Activated naive CD4-positive, alpha-beta T cell treated with anti-CD3 and anti-CD28 coated beads for 36 hours (primary cell): ENCODE measurements at regions of chr1 and their contacts with region 1.

Region 1: GRCh38 chr1:98794196-98794886 is 132.8 kb downstream of the SNX7 start:
- DNase-seq: peak; percentile 74
- H3K4me3 Mint-ChIP-seq: no peak overlapping the region
- H3K27ac Mint-ChIP-seq: no peak overlapping the region
- H3K4me1 Mint-ChIP-seq: peaks cover 22% of the 10 kb centered on the region
- H3K27me3 Mint-ChIP-seq: no peaks in the 10 kb centered on the region

Region 2: GRCh38 chr1:98870959-98871903 is 76.9 kb after region 1 on chr1:
- CTCF ChIA-PET with region 1: no interaction called
- intact Hi-C with region 1: loop called (anchors 1 kb)
- DNase-seq: peak; percentile 60
- H3K4me3 Mint-ChIP-seq: peak overlapping the region; percentile 68
- H3K27ac Mint-ChIP-seq: peak overlapping the region; percentile 97
- H3K4me1 Mint-ChIP-seq: peaks cover 23% of the 10 kb centered on the region
- H3K27me3 Mint-ChIP-seq: no peaks in the 10 kb centered on the region

Region 3: GRCh38 chr1:98940722-98941079 is 146.4 kb after region 1 on chr1:
- CTCF ChIA-PET with region 1: interaction called, 7 read pairs
- intact Hi-C with region 1: loop called (anchors 1 kb)
- DNase-seq: peak; percentile 49
- H3K4me3 Mint-ChIP-seq: no peak overlapping the region
- H3K27ac Mint-ChIP-seq: no peak overlapping the region
- H3K4me1 Mint-ChIP-seq: peaks cover 12% of the 10 kb centered on the region
- H3K27me3 Mint-ChIP-seq: no peaks in the 10 kb centered on the region

Region 4: DNA sequence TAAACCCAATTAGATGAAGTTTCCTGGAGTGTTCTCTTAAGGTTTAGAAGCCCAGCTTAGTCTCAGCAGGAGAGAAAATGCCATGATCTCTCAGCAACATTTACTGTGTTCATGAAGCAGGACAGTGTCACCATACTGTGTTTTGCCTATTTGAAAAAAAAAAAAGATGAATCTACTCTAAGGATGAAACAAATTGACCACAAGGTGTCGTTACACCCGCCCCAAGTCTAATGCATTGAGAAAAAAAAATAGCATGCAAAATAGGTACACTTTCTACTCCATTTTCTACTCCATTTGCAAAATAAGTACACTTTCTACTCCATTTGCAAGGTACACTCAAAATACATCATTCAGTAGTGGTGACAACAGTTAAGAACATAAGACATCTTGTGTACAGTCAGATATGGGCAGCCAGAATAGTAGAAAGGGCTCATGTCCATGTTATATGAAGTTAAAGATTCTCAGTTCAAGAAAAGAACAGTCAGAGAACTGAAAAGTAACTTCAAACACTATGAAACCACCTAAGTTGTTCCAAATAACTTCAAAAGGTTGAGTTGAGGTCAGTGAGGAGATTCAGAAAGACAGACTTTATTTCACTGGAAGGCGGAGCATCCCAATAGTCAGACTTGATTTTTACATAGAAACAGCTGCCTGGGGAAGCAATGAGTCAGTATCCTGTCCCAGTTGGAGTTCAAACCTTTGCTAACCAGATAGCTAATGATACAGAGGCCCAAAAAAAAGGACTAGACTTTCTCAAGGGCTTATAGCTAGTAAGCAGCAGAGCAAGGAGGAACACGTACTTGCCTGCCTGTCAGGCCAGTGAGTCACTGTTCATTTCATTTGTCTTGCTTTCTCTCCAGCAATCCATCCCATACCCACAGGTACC is 197.0 kb after region 1 on chr1:
- CTCF ChIA-PET with region 1: no interaction called
- intact Hi-C with region 1: loop called (anchors 5 kb)
- DNase-seq: peak; percentile 12
- H3K4me3 Mint-ChIP-seq: no peak overlapping the region
- H3K27ac Mint-ChIP-seq: no peak overlapping the region
- H3K4me1 Mint-ChIP-seq: peaks cover 10% of the 10 kb centered on the region
- H3K27me3 Mint-ChIP-seq: no peaks in the 10 kb centered on the region

Region 5: GRCh38 chr1:99180343-99180808 is 386.0 kb after region 1 on chr1:
- CTCF ChIA-PET with region 1: interaction called, 5 read pairs
- intact Hi-C with region 1: loop called (anchors 1 kb)
- DNase-seq: peak; percentile 83
- H3K4me3 Mint-ChIP-seq: no peak overlapping the region
- H3K27ac Mint-ChIP-seq: no peak overlapping the region
- H3K4me1 Mint-ChIP-seq: no peaks in the 10 kb centered on the region
- H3K27me3 Mint-ChIP-seq: no peaks in the 10 kb centered on the region

Region 6: GRCh38 chr1:99685516-99686180 is 891.3 kb after region 1 on chr1:
- CTCF ChIA-PET with region 1: no interaction called
- intact Hi-C with region 1: loop called (anchors 5 kb)
- DNase-seq: peak; percentile 69
- H3K4me3 Mint-ChIP-seq: no peak overlapping the region
- H3K27ac Mint-ChIP-seq: no peak overlapping the region
- H3K4me1 Mint-ChIP-seq: no peaks in the 10 kb centered on the region
- H3K27me3 Mint-ChIP-seq: peaks cover 4% of the 10 kb centered on the region